CD8-positive, alpha-beta T cell (primary cell): ENCODE measurements at regions of chr14 and their contacts with region 1.

Region 1: GRCh38 chr14:61430066-61430739 is 108.8 kb downstream of the PRKCH start:
- DNase-seq: peak in 1 of 9 experiments; percentile 34
- ATAC-seq: no peak
- H3K4me3 ChIP-seq: no peak overlapping the region
- H3K4me3 Mint-ChIP-seq: no peak overlapping the region
- H3K27ac ChIP-seq: peak overlapping the region in 1 of 2 experiments; percentile 14
- H3K27ac Mint-ChIP-seq: peak overlapping the region; percentile 74
- H3K4me1 ChIP-seq: peaks cover 89% of the 10 kb centered on the region
- H3K4me1 Mint-ChIP-seq: peaks cover 93% of the 10 kb centered on the region
- H3K27me3 ChIP-seq: no peaks in the 10 kb centered on the region
- H3K27me3 Mint-ChIP-seq: no peaks in the 10 kb centered on the region
- CTCF ChIP-seq: no peak

Region 2: DNA sequence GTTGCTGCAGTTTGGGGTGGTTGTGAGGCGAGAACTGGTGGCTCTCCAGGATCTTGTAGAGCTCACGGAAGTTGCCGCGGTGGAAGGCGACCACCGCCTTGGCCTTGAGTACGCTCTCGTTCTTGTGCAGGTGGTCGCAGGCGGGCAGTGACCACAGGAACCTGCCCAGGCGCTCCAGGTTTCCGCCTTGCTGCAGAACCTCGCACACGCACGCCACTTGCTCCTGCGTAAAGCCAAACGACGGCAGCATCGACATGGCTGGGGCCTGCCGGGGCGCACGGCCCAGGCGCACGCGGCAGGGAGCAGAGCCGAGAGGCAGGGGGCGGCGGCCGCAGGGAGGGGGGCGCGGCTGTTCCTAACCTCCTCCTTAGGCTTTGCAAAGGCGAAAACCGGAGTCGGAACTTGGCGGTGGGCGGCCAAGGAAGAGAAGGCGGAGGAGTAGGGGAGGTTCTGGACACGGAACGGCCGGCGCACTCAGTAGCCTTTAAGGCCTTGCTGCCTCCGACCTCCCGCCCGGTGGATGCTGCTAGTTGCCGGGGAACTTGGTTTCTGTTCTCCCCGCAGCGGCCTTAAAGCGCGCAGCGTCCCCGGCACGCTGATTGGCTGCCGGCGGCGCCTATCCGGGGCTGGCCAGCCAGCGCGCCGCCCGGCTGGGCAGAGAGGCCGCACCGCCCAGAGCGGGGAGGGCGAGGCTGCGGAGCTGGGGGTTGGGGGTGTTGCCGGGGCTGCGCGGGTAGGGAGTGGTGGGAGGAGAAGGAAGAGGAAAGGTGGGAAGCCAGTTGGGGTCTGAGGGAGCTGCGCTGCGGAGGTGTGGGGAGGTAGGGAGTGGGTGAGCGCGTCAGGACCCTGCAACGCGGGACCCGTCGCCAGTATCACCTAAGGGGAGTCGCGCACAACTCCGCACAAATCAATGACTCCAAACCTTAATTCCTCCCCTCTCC is 781.0 kb before region 1 on chr14 and contains the start of gene SIX1:
- CTCF ChIA-PET with region 1: no interaction called
- POLR2A ChIA-PET with region 1: no interaction called
- intact Hi-C with region 1: loop called in 1 of 2 experiments (anchors 5 kb)
- DNase-seq: peak in 3 of 9 experiments; percentile 5 to 33 (median 32)
- ATAC-seq: peak; percentile 36
- H3K4me3 ChIP-seq: no peak within 1 kb of the TSS
- H3K4me3 Mint-ChIP-seq: peak within 1 kb of the TSS; percentile 51
- H3K27ac ChIP-seq: no peak within 1 kb of the TSS
- H3K27ac Mint-ChIP-seq: no peak within 1 kb of the TSS
- H3K4me1 ChIP-seq: peaks cover 56% of the 10 kb centered on the region
- H3K4me1 Mint-ChIP-seq: peaks cover 51% of the 10 kb centered on the region
- H3K27me3 ChIP-seq: peaks cover 47 to 66% of the 10 kb centered on the region in 2 experiments
- H3K27me3 Mint-ChIP-seq: peaks cover 83% of the 10 kb centered on the region
- CTCF ChIP-seq: no peak
- total RNA-seq, gene SIX1: not detected

Region 3: DNA sequence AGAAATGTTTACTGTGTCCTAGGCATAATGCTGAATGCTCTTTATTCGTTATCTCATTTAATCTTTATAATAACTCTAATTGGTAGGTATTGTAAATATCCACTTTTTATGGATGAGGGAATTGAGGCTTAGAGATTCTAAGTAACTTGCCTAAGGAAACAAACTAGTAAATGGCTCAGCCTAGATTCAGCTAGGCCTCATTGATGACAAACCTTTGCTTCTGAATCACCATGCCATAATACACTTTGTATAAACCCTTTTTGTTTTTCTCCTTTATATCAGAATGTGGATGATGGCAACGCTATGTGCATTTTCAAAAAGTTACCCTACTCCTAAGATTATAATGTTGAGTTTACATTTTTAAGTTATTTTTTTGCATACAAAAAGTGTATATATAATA is 661.6 kb before region 1 on chr14:
- CTCF ChIA-PET with region 1: no interaction called
- POLR2A ChIA-PET with region 1: no interaction called
- intact Hi-C with region 1: no loop called
- DNase-seq: no peak
- ATAC-seq: no peak
- H3K4me3 ChIP-seq: no peak overlapping the region
- H3K4me3 Mint-ChIP-seq: no peak overlapping the region
- H3K27ac ChIP-seq: no peak overlapping the region
- H3K27ac Mint-ChIP-seq: no peak overlapping the region
- H3K4me1 ChIP-seq: no peaks in the 10 kb centered on the region
- H3K4me1 Mint-ChIP-seq: peaks cover 17% of the 10 kb centered on the region
- H3K27me3 ChIP-seq: no peaks in the 10 kb centered on the region
- H3K27me3 Mint-ChIP-seq: no peaks in the 10 kb centered on the region
- CTCF ChIP-seq: no peak

Region 4: DNA sequence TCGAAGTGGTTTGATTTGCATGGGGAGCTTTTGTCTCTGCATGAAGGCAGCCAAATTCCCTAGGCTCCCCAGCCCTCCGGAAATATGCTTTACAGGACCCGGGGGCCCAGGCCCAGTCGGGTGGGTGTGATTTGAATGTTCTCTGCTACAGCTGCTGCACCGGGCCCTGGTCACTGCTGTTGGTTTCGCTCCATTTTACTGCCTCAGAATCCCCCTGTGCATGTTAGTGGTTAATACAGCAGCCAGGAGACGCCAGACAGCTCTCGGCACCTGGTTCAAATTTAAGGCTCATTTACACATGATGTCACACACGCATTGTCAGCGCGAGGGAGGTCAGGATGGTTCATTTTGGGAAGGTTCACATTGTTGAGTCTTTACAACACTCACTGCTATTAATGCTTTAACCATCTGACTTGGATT is 349.6 kb before region 1 on chr14:
- CTCF ChIA-PET with region 1: no interaction called
- POLR2A ChIA-PET with region 1: no interaction called
- intact Hi-C with region 1: no loop called
- DNase-seq: no peak
- ATAC-seq: no peak
- H3K4me3 ChIP-seq: no peak overlapping the region
- H3K4me3 Mint-ChIP-seq: no peak overlapping the region
- H3K27ac ChIP-seq: no peak overlapping the region
- H3K27ac Mint-ChIP-seq: no peak overlapping the region
- H3K4me1 ChIP-seq: no peaks in the 10 kb centered on the region
- H3K4me1 Mint-ChIP-seq: no peaks in the 10 kb centered on the region
- H3K27me3 ChIP-seq: no peaks in the 10 kb centered on the region
- H3K27me3 Mint-ChIP-seq: no peaks in the 10 kb centered on the region
- CTCF ChIP-seq: no peak

Region 5: GRCh38 chr14:61130512-61131260 is 299.5 kb before region 1 on chr14:
- CTCF ChIA-PET with region 1: no interaction called
- POLR2A ChIA-PET with region 1: no interaction called
- intact Hi-C with region 1: no loop called
- DNase-seq: no peak
- ATAC-seq: no peak
- H3K4me3 ChIP-seq: no peak overlapping the region
- H3K4me3 Mint-ChIP-seq: no peak overlapping the region
- H3K27ac ChIP-seq: no peak overlapping the region
- H3K27ac Mint-ChIP-seq: no peak overlapping the region
- H3K4me1 ChIP-seq: no peaks in the 10 kb centered on the region
- H3K4me1 Mint-ChIP-seq: no peaks in the 10 kb centered on the region
- H3K27me3 ChIP-seq: no peaks in the 10 kb centered on the region
- H3K27me3 Mint-ChIP-seq: peaks cover 25% of the 10 kb centered on the region
- CTCF ChIP-seq: no peak

Region 6: GRCh38 chr14:61444215-61444768 is 14.1 kb after region 1 on chr14:
- CTCF ChIA-PET with region 1: interaction called, 12 read pairs
- POLR2A ChIA-PET with region 1: no interaction called
- intact Hi-C with region 1: loop called in 1 of 2 experiments (anchors 1 kb)
- DNase-seq: peak in 8 of 9 experiments; percentile 54 to 89 (median 71)
- ATAC-seq: peak; percentile 83
- H3K4me3 ChIP-seq: no peak overlapping the region
- H3K4me3 Mint-ChIP-seq: peak overlapping the region; percentile 77
- H3K27ac ChIP-seq: peak overlapping the region; percentile 28 to 81
- H3K27ac Mint-ChIP-seq: peak overlapping the region; percentile 94
- H3K4me1 ChIP-seq: peaks cover 95% of the 10 kb centered on the region
- H3K4me1 Mint-ChIP-seq: peaks cover 96% of the 10 kb centered on the region
- H3K27me3 ChIP-seq: no peaks in the 10 kb centered on the region
- H3K27me3 Mint-ChIP-seq: no peaks in the 10 kb centered on the region
- CTCF ChIP-seq: no peak

Region 7: DNA sequence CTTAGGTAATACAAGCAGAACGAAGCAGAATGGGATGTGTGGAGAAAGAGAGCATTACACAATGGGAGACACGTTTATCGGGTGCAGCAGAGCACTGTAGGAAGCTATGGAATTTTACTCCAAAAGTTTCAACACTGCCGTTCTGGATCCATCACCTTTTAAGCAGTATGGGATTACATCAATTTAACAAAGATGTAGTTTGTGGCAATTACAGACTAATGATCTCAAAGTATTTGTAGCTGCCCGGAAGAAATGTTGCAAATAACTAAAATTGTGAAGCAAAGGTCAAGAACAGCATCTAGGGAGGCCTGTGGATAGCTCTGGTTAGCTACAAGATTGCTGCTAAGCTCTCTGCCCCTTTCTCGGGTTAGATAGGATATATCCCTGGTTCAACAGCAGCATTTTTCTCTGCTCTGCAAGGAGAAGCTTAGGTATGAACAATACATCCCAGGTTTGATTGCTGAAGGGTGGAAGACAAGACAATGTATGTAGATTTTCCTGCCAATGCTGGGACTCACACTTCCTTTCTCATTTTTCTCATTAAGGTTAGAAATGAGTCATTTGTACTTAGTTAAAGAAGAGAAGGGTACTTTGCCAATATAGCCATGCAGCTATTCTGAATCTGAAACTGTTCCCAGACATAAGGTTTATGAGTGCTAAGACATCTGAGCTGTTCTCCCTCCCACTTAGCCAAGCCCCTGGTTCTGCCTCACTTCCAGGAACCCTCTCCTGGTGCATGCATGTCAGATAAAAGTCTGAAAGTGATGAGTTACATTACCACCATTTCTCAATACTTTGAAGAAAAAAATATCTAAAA is 190.1 kb after region 1 on chr14:
- CTCF ChIA-PET with region 1: no interaction called
- POLR2A ChIA-PET with region 1: no interaction called
- intact Hi-C with region 1: no loop called
- DNase-seq: no peak
- ATAC-seq: no peak
- H3K4me3 ChIP-seq: no peak overlapping the region
- H3K4me3 Mint-ChIP-seq: no peak overlapping the region
- H3K27ac ChIP-seq: no peak overlapping the region
- H3K27ac Mint-ChIP-seq: no peak overlapping the region
- H3K4me1 ChIP-seq: no peaks in the 10 kb centered on the region
- H3K4me1 Mint-ChIP-seq: peaks cover 5% of the 10 kb centered on the region
- H3K27me3 ChIP-seq: no peaks in the 10 kb centered on the region
- H3K27me3 Mint-ChIP-seq: no peaks in the 10 kb centered on the region
- CTCF ChIP-seq: no peak